Left ventricle myocardium superior (tissue), 1 donor: ENCODE measurements at regions of chr12 and their contacts with region 1.

Region 1: GRCh38 chr12:40107098-40107802 is 1.4 kb upstream of the SLC2A13 start:
- DNase-seq: peak; percentile 94
- ATAC-seq: peak; percentile 56

Region 2: DNA sequence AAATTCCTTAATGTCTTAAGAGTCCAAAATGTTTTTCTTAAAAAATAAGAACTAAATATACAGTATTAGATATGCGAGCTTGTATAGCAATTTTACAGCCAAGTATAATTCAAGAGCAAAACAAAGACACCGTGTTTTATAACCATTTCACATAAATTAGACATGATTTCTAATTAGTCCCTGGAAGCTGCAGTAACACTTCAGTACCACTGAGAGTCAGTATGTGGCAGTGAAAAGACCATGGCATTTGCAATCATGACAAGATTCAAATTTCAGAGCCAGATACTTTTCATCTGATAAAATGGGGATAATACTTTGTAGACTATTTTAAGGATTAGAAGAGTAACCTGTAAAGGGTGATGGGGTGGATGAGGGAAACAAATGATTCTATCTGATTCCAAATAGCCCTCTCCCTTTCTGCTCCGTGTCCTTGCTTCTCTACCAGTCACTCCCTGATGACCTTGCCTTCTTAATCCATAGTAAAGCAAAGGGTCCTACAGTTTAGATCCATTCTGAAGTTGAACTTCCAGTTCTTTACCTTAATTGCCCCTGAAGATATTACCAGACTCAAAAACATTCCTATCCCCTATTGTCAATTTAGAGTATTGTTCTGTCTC is 342.2 kb before region 1 on chr12:
- intact Hi-C with region 1: loop called (anchors 5 kb)
- DNase-seq: no peak
- ATAC-seq: peak; percentile 53

Region 3: DNA sequence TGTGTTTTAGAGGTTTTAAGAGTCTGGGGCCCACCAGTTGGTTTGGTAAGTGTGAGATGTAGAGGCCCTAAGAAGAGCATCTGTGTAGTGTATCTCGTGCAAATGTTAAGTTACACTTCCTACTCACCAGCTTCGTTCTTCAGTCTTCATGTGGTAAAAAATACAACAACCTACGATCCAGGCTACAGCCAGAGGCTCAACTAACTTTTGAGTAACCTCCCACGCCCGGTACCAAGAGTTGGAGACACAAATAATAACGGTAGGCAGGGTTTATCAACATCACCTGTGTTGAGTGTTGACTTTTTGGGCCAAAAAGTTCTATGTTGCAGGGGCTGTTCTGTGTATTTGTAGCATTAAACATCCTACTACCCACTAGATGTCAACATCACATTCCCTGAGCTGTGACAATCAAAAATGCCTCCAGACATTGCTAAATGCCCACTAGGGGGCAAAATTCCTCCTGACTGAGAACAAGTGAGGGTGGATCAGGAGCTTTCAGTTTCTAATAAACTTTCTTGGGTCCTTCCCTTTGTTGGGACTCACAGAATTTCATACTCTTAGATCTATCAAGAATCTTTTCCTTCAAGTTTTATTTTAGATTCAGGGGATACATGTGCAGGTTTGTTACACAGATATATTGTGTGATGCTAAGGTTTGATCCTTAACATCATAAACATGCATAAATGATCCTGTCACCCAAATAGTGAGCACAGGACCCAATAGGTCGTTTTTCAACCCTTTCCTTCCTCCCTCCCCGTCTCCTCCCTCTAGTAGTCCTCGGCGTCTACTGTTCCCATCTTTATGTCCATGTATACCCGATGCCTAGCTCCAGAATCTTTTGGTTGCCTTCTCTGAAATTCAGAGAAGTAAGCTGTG is 96.1 kb before region 1 on chr12:
- intact Hi-C with region 1: loop called (anchors 1 kb)
- DNase-seq: no peak
- ATAC-seq: peak; percentile 96